ENCODE measurements at regions of chr3 and their contacts with region 1.

Region 1: DNA sequence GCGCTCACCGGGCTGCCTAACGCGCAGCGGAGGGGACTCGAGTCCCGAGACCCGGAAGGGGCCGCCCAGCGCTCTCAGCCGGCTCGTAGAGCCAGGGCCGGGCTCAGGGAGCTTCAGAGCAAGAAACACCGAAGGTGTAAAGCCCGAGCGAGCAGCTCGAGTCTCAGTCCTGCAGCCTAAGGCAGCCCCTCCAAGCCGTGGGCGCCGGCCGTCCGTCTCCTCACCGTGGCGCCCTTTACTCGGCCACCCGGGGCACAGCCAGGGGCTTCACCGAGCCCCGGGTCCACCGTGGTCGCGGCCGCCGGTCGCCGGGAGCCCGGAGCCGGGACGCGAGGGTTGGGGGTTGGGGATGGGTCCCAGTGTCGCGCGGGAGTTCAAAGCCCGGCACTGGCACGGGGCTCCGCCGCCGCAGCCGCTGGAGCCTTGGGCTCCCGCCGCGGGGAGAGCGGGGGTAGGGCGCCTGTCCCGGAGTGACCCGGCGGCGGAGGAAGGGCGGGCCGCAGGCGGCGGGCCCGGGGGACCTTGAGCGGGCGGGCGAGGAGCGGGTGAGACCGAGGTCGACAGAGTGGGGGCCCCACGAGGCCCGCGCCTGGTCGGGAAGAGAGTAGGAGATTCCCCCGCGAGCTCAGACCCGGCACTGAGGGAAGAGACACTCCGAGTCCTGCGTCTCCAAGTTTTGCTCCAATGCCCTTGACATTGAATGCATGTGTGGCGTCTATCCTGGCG is 26.9 kb upstream of the THRB start:
- DNase-seq: peak; percentile 80
- H3K4me3 ChIP-seq: peak overlapping the region; percentile 54 to 86 (median 81)
- H3K27ac ChIP-seq: peak overlapping the region; percentile 82 to 92 (median 90)
- H3K4me1 ChIP-seq: peaks cover 0 to 22% (median 14%) of the 10 kb centered on the region in 4 donors
- H3K27me3 ChIP-seq: no peaks in the 10 kb centered on the region
- CTCF ChIP-seq: peak in 1 of 4 experiments; percentile 14
- EP300 ChIP-seq: no peak
- POLR2A ChIP-seq: no peak

Region 2: GRCh38 chr3:24640330-24640877 is 118.8 kb after region 1 on chr3:
- intact Hi-C with region 1: loop called (anchors 10 kb)
- DNase-seq: no peak
- H3K4me3 ChIP-seq: no peak overlapping the region
- H3K27ac ChIP-seq: no peak overlapping the region
- H3K4me1 ChIP-seq: peaks cover 0 to 5% (median 0%) of the 10 kb centered on the region in 4 donors
- H3K27me3 ChIP-seq: no peaks in the 10 kb centered on the region
- CTCF ChIP-seq: peak in 2 of 4 experiments; percentile 14 to 28
- EP300 ChIP-seq: no peak
- POLR2A ChIP-seq: no peak

Region 3: DNA sequence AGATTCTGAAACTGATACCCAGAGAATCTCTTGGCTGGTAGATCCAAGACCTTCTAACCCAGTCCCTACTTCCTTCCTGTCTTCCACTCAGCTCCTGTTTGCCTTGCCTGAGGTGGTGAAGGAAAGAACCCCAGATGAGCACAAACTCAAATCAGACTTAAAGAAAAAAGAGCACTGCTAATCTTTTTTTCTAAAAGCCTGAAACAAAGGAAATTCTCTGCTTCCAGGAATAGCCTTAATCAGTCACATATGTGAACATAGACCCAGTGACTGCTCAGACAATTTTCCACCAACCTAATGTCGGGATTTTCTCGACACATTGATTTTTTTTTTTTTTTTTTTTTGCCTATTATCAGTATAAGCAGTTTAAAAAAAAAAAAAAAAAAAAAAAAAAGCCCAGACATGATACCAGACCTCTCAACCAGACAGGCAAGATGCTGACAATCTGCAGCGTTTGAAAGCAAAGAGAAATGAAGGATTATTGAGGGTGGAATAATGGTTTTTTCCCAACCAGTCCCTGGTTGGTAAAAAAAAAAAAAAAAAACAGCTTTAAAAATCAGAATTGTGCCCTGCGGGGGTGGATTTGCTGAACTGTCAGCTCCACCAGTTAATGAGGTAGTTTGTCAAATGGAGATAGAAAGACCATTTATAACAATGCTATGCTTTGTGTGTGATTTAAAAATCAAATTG is 649.7 kb after region 1 on chr3:
- intact Hi-C with region 1: no loop called
- DNase-seq: no peak
- H3K4me3 ChIP-seq: no peak overlapping the region
- H3K27ac ChIP-seq: no peak overlapping the region
- H3K4me1 ChIP-seq: no peaks in the 10 kb centered on the region
- H3K27me3 ChIP-seq: no peaks in the 10 kb centered on the region
- CTCF ChIP-seq: no peak
- EP300 ChIP-seq: no peak
- POLR2A ChIP-seq: no peak

Region 4: GRCh38 chr3:26049951-26050350 is 1528.4 kb after region 1 on chr3:
- intact Hi-C with region 1: no loop called
- DNase-seq: no peak
- H3K4me3 ChIP-seq: no peak overlapping the region
- H3K27ac ChIP-seq: no peak overlapping the region
- H3K4me1 ChIP-seq: no peaks in the 10 kb centered on the region
- H3K27me3 ChIP-seq: no peaks in the 10 kb centered on the region
- CTCF ChIP-seq: no peak
- EP300 ChIP-seq: no peak
- POLR2A ChIP-seq: no peak

Measured in sigmoid colon (tissue), 7 donors.